ENCODE measurements at regions of chr2 and their contacts with region 1.

Region 1: GRCh38 chr2:64698668-64699444 is 45.1 kb upstream of the SERTAD2 start:
- DNase-seq: peak; percentile 64
- H3K4me3 Mint-ChIP-seq: peak overlapping the region; percentile 66
- H3K27ac Mint-ChIP-seq: peak overlapping the region; percentile 90
- H3K4me1 Mint-ChIP-seq: peaks cover 54% of the 10 kb centered on the region
- H3K27me3 Mint-ChIP-seq: no peaks in the 10 kb centered on the region

Region 2: GRCh38 chr2:64036034-64036705 is 662.7 kb before region 1 on chr2:
- intact Hi-C with region 1: loop called (anchors 1 kb)
- DNase-seq: peak; percentile 82
- H3K4me3 Mint-ChIP-seq: peak overlapping the region; percentile 22
- H3K27ac Mint-ChIP-seq: peak overlapping the region; percentile 76
- H3K4me1 Mint-ChIP-seq: peaks cover 42% of the 10 kb centered on the region
- H3K27me3 Mint-ChIP-seq: no peaks in the 10 kb centered on the region

Region 3: DNA sequence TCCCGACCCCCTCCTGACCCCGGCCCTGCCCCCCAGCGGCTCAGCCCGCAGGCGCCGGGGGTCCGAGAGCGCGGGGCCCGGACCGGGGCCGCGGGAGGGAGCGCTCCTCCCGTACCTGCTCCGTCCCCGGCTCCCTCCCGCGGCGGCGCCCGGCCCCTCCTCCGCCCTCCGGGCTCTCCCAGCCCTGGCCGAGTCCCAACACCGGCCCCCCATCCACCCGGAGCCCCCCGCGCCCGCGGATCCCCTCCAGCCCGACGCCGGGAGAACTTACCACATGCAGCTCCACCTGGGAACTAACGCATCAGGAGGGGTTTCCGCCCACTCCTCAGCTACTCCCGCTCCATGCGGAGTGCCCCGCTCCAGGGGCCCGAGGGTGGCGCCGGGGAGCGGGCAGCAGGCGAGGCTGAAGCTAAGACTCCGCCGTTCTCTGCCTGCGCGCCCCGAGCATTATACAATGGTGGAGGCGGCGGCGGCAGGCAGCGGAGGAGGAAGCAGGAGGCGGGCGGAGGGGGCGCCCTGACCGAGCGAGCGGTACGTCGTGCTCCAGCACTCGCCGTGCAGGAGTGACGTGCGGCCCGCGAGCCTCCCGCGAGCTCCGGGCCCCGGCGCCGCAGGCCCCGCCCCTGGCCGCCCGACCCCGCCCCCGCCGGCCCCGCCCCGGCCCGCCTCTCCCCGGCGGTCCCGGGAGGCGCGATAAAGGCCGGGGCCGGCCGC is 45.4 kb before region 1 on chr2 and contains the start of gene SERTAD2:
- intact Hi-C with region 1: loop called (anchors 1 kb)
- DNase-seq: peak; percentile 96
- H3K4me3 Mint-ChIP-seq: peak within 1 kb of the TSS; percentile 95
- H3K27ac Mint-ChIP-seq: peak within 1 kb of the TSS; percentile 92
- H3K4me1 Mint-ChIP-seq: peaks cover 65% of the 10 kb centered on the region
- H3K27me3 Mint-ChIP-seq: no peaks in the 10 kb centered on the region
- total RNA-seq, gene SERTAD2: 24.6 and 26.7 TPM in 2 replicates

Region 4: DNA sequence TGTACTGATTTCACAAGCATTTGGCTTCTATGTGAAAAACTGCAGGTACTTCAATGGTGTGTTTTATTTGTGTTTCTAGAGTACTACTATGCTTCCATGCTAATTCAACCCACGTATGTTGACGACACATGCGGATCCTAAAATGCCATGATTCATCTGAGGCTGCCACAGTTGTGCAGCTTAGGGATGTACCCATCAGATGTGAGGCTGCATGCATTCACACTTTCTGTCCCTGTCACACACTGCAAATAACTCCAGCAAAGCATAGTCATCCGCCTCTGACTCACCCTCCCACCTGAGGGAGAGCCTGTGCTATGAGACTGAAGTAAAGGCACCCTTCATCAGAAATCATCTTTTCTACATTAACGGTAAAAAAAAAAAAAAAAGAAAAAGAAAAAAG is 23.0 kb before region 1 on chr2:
- intact Hi-C with region 1: loop called (anchors 1 kb)
- DNase-seq: peak; percentile 79
- H3K4me3 Mint-ChIP-seq: no peak overlapping the region
- H3K27ac Mint-ChIP-seq: peak overlapping the region; percentile 71
- H3K4me1 Mint-ChIP-seq: peaks cover 45% of the 10 kb centered on the region
- H3K27me3 Mint-ChIP-seq: no peaks in the 10 kb centered on the region

Region 5: DNA sequence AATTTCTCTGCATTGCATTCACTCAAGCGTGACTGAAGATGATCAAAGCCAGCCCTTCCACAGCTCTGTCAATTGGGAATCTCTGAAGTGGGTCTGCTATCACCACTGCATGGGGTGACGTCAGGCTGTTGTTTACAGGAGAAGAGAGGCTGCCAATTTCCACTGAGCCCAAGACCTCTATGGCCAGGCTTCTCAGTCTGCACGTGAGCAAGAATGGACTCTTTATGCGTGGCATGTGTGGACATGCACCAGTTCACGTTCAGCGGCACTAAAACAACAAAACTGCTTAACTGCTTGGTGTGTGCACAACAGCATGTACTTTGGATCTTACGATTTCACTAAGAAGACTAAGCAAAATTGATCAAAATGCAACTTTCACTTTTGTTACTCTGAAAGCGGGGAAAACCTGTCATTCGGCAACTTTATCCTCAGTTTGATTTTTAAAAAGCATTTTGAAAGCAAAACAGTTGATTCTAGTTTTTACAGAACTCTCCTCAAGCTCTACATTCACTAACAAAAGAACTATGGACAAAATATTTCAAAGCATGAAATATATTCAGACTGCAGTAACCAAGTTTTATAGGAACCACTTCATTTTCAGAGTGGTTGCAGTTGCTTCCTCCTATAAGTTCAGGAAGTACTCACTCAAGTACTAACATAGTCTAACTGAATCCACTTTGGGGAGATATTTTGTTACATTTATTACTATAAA is 31.9 kb after region 1 on chr2:
- intact Hi-C with region 1: loop called (anchors 1 kb)
- DNase-seq: peak; percentile 85
- H3K4me3 Mint-ChIP-seq: peak overlapping the region; percentile 84
- H3K27ac Mint-ChIP-seq: peak overlapping the region; percentile 95
- H3K4me1 Mint-ChIP-seq: peaks cover 55% of the 10 kb centered on the region
- H3K27me3 Mint-ChIP-seq: no peaks in the 10 kb centered on the region

Region 6: GRCh38 chr2:64737547-64737946 is 38.7 kb after region 1 on chr2:
- intact Hi-C with region 1: loop called (anchors 1 kb)
- DNase-seq: peak; percentile 73
- H3K4me3 Mint-ChIP-seq: peak overlapping the region; percentile 72
- H3K27ac Mint-ChIP-seq: peak overlapping the region; percentile 77
- H3K4me1 Mint-ChIP-seq: peaks cover 30% of the 10 kb centered on the region
- H3K27me3 Mint-ChIP-seq: no peaks in the 10 kb centered on the region

Region 7: DNA sequence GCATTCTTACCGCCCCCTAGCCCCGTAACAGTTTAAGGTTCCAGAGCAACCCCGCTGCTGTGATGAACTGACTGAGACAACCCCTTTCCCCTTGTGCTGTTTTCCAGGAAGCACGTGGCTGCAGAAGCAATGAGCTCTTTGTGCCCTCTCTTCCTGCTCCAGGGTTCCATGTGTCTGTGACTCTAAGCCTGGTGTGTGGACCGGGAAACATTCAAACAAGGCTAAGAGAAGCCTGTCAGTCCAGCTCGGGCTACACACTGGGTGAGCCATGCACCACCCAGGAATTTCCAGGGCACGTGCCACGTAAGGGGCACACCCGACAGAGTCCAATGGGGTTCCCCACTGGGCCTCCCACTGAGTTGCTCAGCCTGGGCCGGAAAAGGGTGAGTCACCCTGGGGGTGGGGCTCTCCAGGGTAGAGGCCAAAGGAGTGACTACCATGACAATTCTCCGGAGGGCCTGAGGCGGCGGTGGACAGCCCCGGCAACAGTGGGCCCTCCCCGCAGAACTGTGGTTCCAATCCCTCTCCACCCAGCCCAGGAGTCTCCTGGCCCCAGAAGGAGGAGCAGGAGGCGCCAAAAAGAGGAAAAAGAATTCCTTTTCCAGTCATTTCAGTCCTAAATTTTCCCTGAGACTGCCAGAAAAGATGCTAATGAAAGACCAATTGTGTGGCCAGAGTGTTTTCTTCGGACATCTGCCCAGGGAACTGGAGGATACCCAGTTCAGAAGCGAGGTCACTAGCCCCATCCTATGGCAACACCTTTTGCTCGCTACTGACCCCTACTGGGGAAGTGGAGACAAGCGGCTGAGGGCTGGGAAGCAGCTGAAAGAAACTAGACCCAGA is 132.5 kb after region 1 on chr2:
- intact Hi-C with region 1: loop called (anchors 1 kb)
- DNase-seq: peak; percentile 95
- H3K4me3 Mint-ChIP-seq: peak overlapping the region; percentile 57
- H3K27ac Mint-ChIP-seq: peak overlapping the region; percentile 85
- H3K4me1 Mint-ChIP-seq: peaks cover 28% of the 10 kb centered on the region
- H3K27me3 Mint-ChIP-seq: peaks cover 8% of the 10 kb centered on the region

Measured in activated CD4-positive, alpha-beta T cell treated with anti-CD3 and anti-CD28 coated beads, Interleukin-2, amount 10 ng/mL, durations not matched to agents 24 days and 14 days (primary cell).